SK-N-SH (cell line): ENCODE measurements at regions of chr21 and their contacts with region 1.

Region 1: GRCh38 chr21:28745131-28746016 is 247.3 kb downstream of the LTN1 start:
- DNase-seq: peak; percentile 52
- H3K4me3 ChIP-seq: peak overlapping the region; percentile 38 to 47
- H3K27ac ChIP-seq: peak overlapping the region; percentile 22 to 81; a peak in 3 of 4 replicates
- H3K4me1 ChIP-seq: peaks cover 0 to 15% of the 10 kb centered on the region in 2 experiments; a peak in 2 of 4 replicates
- H3K27me3 ChIP-seq: no peaks in the 10 kb centered on the region
- CTCF ChIP-seq: peak; percentile 91
- EP300 ChIP-seq: peak in 1 of 2 experiments; percentile 38; a peak in 1 of 4 replicates
- RAD21 ChIP-seq: peak; percentile 100

Region 2: GRCh38 chr21:26850108-26850643 is 1895.2 kb before region 1 on chr21:
- CTCF ChIA-PET with region 1: interaction called, 92 read pairs
- POLR2A ChIA-PET with region 1: interaction called, 10 read pairs
- DNase-seq: peak; percentile 51
- H3K4me3 ChIP-seq: no peak overlapping the region; a peak in 1 of 4 replicates
- H3K27ac ChIP-seq: peak overlapping the region in 1 of 2 experiments; percentile 53; a peak in 1 of 4 replicates
- H3K4me1 ChIP-seq: peaks cover 0 to 14% of the 10 kb centered on the region in 2 experiments; a peak in 2 of 4 replicates
- H3K27me3 ChIP-seq: no peaks in the 10 kb centered on the region
- CTCF ChIP-seq: peak; percentile 74
- EP300 ChIP-seq: no peak
- RAD21 ChIP-seq: peak; percentile 74

Region 3: DNA sequence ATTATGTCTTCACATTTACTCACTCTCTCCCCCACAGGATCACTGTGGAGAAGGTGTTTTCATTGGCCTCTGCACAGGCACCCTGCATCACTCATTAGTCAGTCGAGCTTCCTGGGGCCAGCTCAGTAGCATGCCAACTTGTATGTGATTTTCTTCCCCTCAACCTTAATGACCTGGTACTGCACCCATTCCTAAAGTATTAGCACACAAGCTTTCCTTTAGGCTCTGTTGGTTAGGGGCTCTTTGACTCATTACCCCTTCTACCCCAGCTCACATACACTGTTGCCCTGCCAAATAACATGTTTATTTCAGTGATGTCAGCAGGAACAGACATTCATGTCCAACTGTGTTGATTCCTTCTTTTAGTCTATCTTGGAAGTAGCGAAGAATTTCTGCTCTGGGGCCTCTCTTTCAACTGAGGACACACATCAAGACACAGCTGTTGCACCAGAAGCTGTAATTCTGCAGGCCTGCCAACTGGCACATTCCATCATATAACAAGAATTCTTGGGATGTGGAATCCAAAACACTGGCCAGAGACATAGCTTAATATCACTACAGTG is 1175.0 kb before region 1 on chr21:
- CTCF ChIA-PET with region 1: interaction called, 11 read pairs
- POLR2A ChIA-PET with region 1: no interaction called
- DNase-seq: no peak
- H3K4me3 ChIP-seq: no peak overlapping the region
- H3K27ac ChIP-seq: peak overlapping the region; percentile 24 to 87; a peak in 3 of 4 replicates
- H3K4me1 ChIP-seq: peaks cover 2 to 33% of the 10 kb centered on the region in 2 experiments; a peak in 2 of 4 replicates
- H3K27me3 ChIP-seq: no peaks in the 10 kb centered on the region
- CTCF ChIP-seq: no peak
- EP300 ChIP-seq: peak; percentile 8 to 33; a peak in 1 of 4 replicates
- RAD21 ChIP-seq: no peak

Region 4: DNA sequence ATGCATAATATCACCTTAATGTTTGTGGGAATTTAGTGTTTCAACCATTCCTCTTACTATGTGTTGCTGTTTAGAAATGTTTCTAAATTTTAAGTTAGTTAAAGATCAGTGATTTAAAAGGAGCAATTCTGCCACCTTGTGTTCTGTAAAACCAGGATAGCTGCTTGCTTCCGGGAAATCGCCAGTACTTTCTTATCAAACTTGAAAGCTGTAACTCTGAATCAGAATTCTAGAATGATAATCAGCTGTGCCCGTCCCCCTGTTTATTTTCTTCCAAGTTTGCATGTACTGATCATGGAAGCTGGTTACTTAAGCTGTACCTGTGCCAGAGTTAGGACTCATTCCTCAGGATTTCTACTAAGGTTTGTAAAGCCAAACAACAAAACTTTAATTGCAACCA is 409.1 kb before region 1 on chr21:
- CTCF ChIA-PET with region 1: interaction called, 104 read pairs
- POLR2A ChIA-PET with region 1: interaction called, 9 read pairs
- DNase-seq: peak; percentile 22
- H3K4me3 ChIP-seq: peak overlapping the region in 1 of 2 experiments; percentile 3; a peak in 1 of 4 replicates
- H3K27ac ChIP-seq: peak overlapping the region; percentile 6 to 85; a peak in 3 of 4 replicates
- H3K4me1 ChIP-seq: peaks cover 0 to 17% of the 10 kb centered on the region in 2 experiments; a peak in 3 of 4 replicates
- H3K27me3 ChIP-seq: no peaks in the 10 kb centered on the region
- CTCF ChIP-seq: peak; percentile 76
- EP300 ChIP-seq: peak; percentile 40 to 63; a peak in 2 of 4 replicates
- RAD21 ChIP-seq: peak; percentile 86

Region 5: GRCh38 chr21:28508126-28508525 is 237.2 kb before region 1 on chr21:
- CTCF ChIA-PET with region 1: no interaction called
- POLR2A ChIA-PET with region 1: no interaction called
- DNase-seq: no peak
- H3K4me3 ChIP-seq: no peak overlapping the region
- H3K27ac ChIP-seq: peak overlapping the region in 1 of 2 experiments; percentile 47; a peak in 2 of 4 replicates
- H3K4me1 ChIP-seq: 0 out of 4 replicates have a peak, but pooled peaks cover 0 to under 1% of the 10 kb centered on the region in 2 experiments
- H3K27me3 ChIP-seq: no peaks in the 10 kb centered on the region
- CTCF ChIP-seq: no peak
- EP300 ChIP-seq: no peak
- RAD21 ChIP-seq: no peak

Region 6: GRCh38 chr21:28781602-28782276 is 36.4 kb after region 1 on chr21:
- CTCF ChIA-PET with region 1: interaction called, 10 read pairs
- POLR2A ChIA-PET with region 1: no interaction called
- DNase-seq: peak; percentile 37
- H3K4me3 ChIP-seq: no peak overlapping the region
- H3K27ac ChIP-seq: no peak overlapping the region
- H3K4me1 ChIP-seq: no peaks in the 10 kb centered on the region
- H3K27me3 ChIP-seq: no peaks in the 10 kb centered on the region
- CTCF ChIP-seq: peak; percentile 65
- EP300 ChIP-seq: no peak
- RAD21 ChIP-seq: peak; percentile 32